A673 (cell line): ENCODE measurements at regions of chr6 and their contacts with region 1.

Region 1: DNA sequence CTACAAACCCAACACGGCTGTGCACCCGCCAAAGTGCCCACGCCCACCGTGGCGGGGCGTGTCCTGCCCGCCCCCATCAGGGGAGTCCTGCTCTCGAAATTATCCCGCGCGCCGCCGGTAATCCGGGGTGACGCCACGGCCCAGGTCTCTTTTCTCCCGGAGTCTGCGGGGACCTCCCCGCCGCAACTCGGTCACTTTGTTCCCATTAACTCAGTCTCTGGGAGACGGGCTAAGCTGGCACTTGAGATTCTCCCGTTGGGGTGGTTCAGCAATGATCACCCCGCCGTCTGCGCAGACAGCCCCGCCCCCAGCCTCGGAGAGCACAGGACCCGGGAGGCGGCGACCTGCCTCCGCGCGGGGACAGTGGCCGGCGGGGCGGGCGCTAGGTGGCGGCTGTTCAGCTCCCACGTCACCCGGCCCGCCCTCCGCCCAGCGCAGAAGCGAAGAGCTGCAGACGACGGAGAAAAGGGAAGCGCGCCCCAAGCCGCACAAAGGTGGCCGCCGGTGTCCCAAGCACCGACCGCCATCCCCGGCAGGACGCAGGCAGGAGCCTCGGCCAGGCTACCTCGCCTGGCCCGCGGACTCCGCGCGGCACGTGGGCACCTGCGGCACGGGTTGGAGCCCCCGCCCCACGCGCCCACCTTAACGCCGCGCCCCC is 31.5 kb downstream of the SF3B5 start:
- DNase-seq: peak; percentile 64
- H3K4me3 ChIP-seq: peak overlapping the region; percentile 59
- H3K27ac ChIP-seq: no peak overlapping the region
- H3K4me1 ChIP-seq: peaks cover 3% of the 10 kb centered on the region
- H3K27me3 ChIP-seq: peaks cover 69% of the 10 kb centered on the region
- CTCF ChIP-seq: peak; percentile 36; the same call in 1 of the 2 replicates

Region 2: DNA sequence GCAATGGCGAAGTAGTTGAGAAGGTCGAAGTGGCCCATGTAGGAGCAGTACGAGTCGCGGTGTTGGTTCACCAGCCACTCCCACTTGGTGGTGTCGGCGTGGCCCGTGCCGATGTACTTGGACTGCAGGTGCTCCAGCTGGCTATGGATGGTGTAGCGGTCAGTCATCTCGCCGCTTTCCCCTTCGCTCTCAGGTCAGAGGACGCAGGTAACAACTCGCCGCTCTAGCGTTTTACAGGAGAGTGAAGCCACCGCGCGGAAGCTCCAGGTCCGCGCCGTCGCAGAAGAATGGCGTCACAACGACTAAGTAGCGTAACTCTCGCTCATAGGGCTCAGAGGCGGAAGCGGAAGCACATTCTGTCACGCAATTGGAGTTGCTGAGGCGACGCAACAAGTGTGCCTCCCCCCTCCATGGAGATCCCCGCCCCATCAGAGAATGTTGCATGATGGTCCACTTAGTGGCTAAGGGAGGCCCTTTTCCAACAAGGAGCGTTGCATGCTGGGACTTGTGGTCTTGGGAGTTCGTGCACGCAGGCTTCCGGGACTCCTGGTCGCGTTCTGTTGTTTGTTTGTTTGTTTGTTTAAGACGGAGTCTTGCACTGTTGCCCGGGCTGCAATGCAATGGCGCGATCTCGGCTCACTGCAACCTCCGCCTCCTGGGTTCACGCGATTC is 31.6 kb after region 1 on chr6 and contains the start of gene SF3B5:
- CTCF ChIA-PET with region 1: no interaction called
- POLR2A ChIA-PET with region 1: no interaction called
- intact Hi-C with region 1: loop called (anchors 1 kb)
- DNase-seq: peak; percentile 100
- H3K4me3 ChIP-seq: peak within 1 kb of the TSS; percentile 80
- H3K27ac ChIP-seq: peak within 1 kb of the TSS; percentile 75
- H3K4me1 ChIP-seq: peaks cover 13% of the 10 kb centered on the region
- H3K27me3 ChIP-seq: no peaks in the 10 kb centered on the region
- CTCF ChIP-seq: no peak
- total RNA-seq, gene SF3B5: 135 and 136 TPM in 2 replicates